ENCODE measurements at regions of chr2 and their contacts with region 1.

Region 1: GRCh38 chr2:197310271-197310985 is at the start of gene ANKRD44:
- DNase-seq: peak; percentile 78 to 94 (median 87)
- ATAC-seq: peak; percentile 73 to 85 (median 77)
- H3K4me3 ChIP-seq: peak within 1 kb of the TSS; percentile 84 to 99
- H3K4me3 Mint-ChIP-seq: peak within 1 kb of the TSS; percentile 92 to 95 (median 92)
- H3K27ac ChIP-seq: peak within 1 kb of the TSS; percentile 83
- H3K27ac Mint-ChIP-seq: peak within 1 kb of the TSS; percentile 99
- H3K4me1 ChIP-seq: peaks cover 34 to 39% of the 10 kb centered on the region in 2 experiments
- H3K4me1 Mint-ChIP-seq: peaks cover 65 to 83% (median 74%) of the 10 kb centered on the region in 3 donors
- H3K27me3 ChIP-seq: no peaks in the 10 kb centered on the region
- H3K27me3 Mint-ChIP-seq: no peaks in the 10 kb centered on the region
- total RNA-seq, gene ANKRD44: 225 to 333 (median 238) TPM

Region 2: DNA sequence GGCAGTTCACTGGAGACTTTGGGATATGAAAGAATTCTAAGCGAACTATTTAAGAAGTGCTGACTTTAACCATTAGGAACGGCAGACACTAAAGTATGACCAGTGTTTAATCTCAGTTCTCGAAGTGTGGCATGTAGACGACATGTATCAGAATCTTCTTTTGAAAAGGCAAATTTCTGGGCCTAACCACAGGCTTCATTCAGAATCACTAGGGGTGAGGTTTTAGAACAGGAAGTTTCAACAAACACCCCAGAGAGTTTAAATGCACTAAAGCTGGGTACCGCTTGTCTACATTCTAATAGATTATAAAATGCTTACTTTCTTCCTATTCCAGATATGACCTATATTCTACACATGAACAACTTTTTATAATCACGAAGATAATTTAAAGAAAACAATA is 180.1 kb before region 1 on chr2:
- CTCF ChIA-PET with region 1: no interaction called
- POLR2A ChIA-PET with region 1: no interaction called
- DNase-seq: peak in 9 of 35 experiments; percentile 13 to 59 (median 21)
- ATAC-seq: peak; percentile 88 to 95 (median 92)
- H3K4me3 ChIP-seq: no peak overlapping the region
- H3K4me3 Mint-ChIP-seq: peak overlapping the region; percentile 0 to 53 (median 2)
- H3K27ac ChIP-seq: peak overlapping the region; percentile 56
- H3K27ac Mint-ChIP-seq: peak overlapping the region; percentile 72 to 81
- H3K4me1 ChIP-seq: peaks cover 21 to 48% of the 10 kb centered on the region in 2 experiments
- H3K4me1 Mint-ChIP-seq: peaks cover 81 to 84% (median 83%) of the 10 kb centered on the region in 3 donors
- H3K27me3 ChIP-seq: no peaks in the 10 kb centered on the region
- H3K27me3 Mint-ChIP-seq: no peaks in the 10 kb centered on the region

Region 3: DNA sequence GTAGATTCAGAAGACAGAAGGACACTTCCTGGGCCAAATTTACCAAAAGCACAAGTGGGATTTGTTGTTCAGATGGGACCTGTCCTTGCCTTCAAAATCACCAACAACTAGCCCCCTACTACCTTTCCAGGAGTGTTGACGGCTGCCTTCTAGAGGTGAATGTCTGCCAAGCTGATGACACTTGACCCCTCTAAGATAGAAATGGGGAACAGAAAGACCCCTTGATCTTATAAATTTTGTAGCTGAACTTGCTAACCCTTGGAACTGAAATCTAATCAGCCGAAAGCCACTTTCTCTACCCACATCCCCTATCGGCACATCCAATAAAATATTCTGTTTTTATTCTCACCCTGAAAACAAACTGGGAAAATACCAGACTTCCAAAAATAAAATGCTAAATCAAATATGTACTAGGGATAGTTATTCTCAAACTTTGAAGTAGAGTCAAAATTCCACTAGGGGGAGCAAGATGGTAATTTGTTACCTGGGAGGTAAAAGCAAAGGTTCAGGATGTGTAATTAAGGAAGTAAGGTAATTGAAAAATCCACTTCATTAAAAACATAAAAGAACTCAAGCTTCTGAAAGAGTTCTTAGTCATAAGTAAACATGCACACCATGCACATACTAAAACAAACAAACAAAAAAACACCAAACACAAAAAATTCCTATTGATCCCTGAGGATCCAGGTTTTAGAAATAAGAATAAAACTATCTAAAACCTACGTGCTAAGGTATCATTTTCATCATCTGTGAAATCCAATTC is 119.1 kb before region 1 on chr2:
- CTCF ChIA-PET with region 1: interaction called, 13 to 50 read pairs
- POLR2A ChIA-PET with region 1: interaction called, 4 to 5 read pairs
- DNase-seq: peak in 1 of 35 experiments; percentile 84
- ATAC-seq: peak; percentile 51 to 63 (median 56)
- H3K4me3 ChIP-seq: no peak overlapping the region
- H3K4me3 Mint-ChIP-seq: peak overlapping the region in 2 of 3 donors; percentile 7 to 51
- H3K27ac ChIP-seq: peak overlapping the region; percentile 79
- H3K27ac Mint-ChIP-seq: peak overlapping the region; percentile 78 to 86
- H3K4me1 ChIP-seq: peaks cover 35 to 61% of the 10 kb centered on the region in 2 experiments
- H3K4me1 Mint-ChIP-seq: peaks cover 83 to 88% (median 87%) of the 10 kb centered on the region in 3 donors
- H3K27me3 ChIP-seq: no peaks in the 10 kb centered on the region
- H3K27me3 Mint-ChIP-seq: no peaks in the 10 kb centered on the region

Region 4: GRCh38 chr2:197209742-197210408 is 100.6 kb before region 1 on chr2:
- CTCF ChIA-PET with region 1: interaction called, 4 to 14 read pairs
- POLR2A ChIA-PET with region 1: interaction called, 5 read pairs
- DNase-seq: peak in 8 of 35 experiments; percentile 9 to 64 (median 27)
- ATAC-seq: peak; percentile 8 to 35 (median 28)
- H3K4me3 ChIP-seq: no peak overlapping the region
- H3K4me3 Mint-ChIP-seq: peak overlapping the region; percentile 52 to 79 (median 63)
- H3K27ac ChIP-seq: peak overlapping the region; percentile 95
- H3K27ac Mint-ChIP-seq: peak overlapping the region; percentile 98 to 99
- H3K4me1 ChIP-seq: peaks cover 84 to 94% of the 10 kb centered on the region in 2 experiments
- H3K4me1 Mint-ChIP-seq: peaks cover 97 to 99% (median 99%) of the 10 kb centered on the region in 3 donors
- H3K27me3 ChIP-seq: no peaks in the 10 kb centered on the region
- H3K27me3 Mint-ChIP-seq: no peaks in the 10 kb centered on the region

Region 5: GRCh38 chr2:197255543-197255942 is 54.9 kb before region 1 on chr2:
- CTCF ChIA-PET with region 1: interaction called, 7 to 29 read pairs
- POLR2A ChIA-PET with region 1: interaction called, 6 to 7 read pairs
- DNase-seq: peak; percentile 35 to 87 (median 72)
- ATAC-seq: peak; percentile 72 to 92 (median 82)
- H3K4me3 ChIP-seq: peak overlapping the region; percentile 24 to 29
- H3K4me3 Mint-ChIP-seq: peak overlapping the region; percentile 77 to 83 (median 77)
- H3K27ac ChIP-seq: peak overlapping the region; percentile 95
- H3K27ac Mint-ChIP-seq: peak overlapping the region; percentile 97 to 98
- H3K4me1 ChIP-seq: peaks cover 50 to 66% of the 10 kb centered on the region in 2 experiments
- H3K4me1 Mint-ChIP-seq: peaks cover 78 to 86% (median 83%) of the 10 kb centered on the region in 3 donors
- H3K27me3 ChIP-seq: no peaks in the 10 kb centered on the region
- H3K27me3 Mint-ChIP-seq: no peaks in the 10 kb centered on the region

Region 6: DNA sequence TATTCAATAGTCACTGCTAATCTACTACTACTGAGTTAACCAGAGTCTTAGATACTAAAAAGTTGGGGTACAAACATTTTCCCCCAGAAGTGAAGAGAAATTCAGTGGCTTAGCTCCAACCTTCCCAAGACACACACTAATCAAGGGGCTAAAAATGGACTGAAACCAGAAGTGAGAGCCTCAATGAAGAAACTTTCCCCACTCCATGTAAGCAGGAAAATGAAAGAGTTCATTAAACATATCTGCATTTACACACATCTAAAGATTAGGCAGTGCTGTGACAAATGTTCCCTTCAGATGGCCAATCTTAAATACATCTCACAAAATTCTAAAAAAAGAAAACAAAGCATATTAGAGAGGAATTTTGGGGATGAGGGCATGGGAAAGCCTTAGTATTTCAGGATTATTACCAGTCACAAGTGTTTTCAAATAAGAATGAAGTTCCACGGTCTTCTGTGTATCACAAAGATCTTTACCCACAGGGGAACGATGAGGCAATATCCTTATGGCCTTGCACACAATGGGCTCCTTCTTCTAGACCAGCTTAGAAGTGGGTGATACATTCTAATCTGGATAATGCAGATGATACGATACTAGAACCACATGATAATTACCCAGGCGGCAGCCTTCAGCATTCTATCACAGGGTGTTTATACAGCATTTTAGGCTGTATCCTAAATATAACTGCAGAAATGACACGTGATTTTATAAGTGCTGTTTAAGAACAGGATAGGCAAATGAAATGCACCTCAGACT is 17.0 kb before region 1 on chr2:
- CTCF ChIA-PET with region 1: interaction called in 1 of 2 experiments, 12 read pairs
- POLR2A ChIA-PET with region 1: interaction called, 4 to 19 read pairs
- DNase-seq: peak in 10 of 35 experiments; percentile 12 to 63 (median 22)
- ATAC-seq: peak; percentile 63 to 74 (median 64)
- H3K4me3 ChIP-seq: peak overlapping the region; percentile 30 to 31
- H3K4me3 Mint-ChIP-seq: peak overlapping the region; percentile 65 to 92 (median 78)
- H3K27ac ChIP-seq: peak overlapping the region; percentile 79
- H3K27ac Mint-ChIP-seq: peak overlapping the region; percentile 96 to 99
- H3K4me1 ChIP-seq: peaks cover 57 to 60% of the 10 kb centered on the region in 2 experiments
- H3K4me1 Mint-ChIP-seq: peaks cover 92 to 95% (median 94%) of the 10 kb centered on the region in 3 donors
- H3K27me3 ChIP-seq: no peaks in the 10 kb centered on the region
- H3K27me3 Mint-ChIP-seq: no peaks in the 10 kb centered on the region

Region 7: DNA sequence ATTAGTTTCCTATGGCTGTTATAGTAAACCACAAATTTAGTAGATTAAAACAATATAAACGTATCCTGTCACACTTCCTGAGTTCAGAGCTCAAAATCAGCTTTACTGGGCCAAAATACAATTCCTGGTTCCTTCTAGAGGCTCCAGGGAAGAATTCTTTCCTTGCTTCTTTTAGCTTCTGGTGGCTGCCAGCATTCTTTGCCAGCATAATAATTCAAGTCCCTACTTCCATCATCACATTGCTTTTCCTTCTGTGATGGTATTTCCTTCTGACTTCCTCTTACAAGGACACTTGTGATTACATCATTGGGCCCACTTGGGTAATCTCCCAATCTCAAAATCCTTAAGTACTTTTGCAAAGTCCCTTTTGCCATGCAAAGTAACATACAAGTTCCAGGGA is 246.0 kb after region 1 on chr2:
- CTCF ChIA-PET with region 1: no interaction called
- POLR2A ChIA-PET with region 1: no interaction called
- DNase-seq: no peak
- ATAC-seq: no peak
- H3K4me3 ChIP-seq: no peak overlapping the region
- H3K4me3 Mint-ChIP-seq: no peak overlapping the region
- H3K27ac ChIP-seq: no peak overlapping the region
- H3K27ac Mint-ChIP-seq: peak overlapping the region; percentile 21 to 68
- H3K4me1 ChIP-seq: no peaks in the 10 kb centered on the region
- H3K4me1 Mint-ChIP-seq: peaks cover 0 to 6% (median 3%) of the 10 kb centered on the region in 3 donors
- H3K27me3 ChIP-seq: no peaks in the 10 kb centered on the region
- H3K27me3 Mint-ChIP-seq: no peaks in the 10 kb centered on the region

Region 8: DNA sequence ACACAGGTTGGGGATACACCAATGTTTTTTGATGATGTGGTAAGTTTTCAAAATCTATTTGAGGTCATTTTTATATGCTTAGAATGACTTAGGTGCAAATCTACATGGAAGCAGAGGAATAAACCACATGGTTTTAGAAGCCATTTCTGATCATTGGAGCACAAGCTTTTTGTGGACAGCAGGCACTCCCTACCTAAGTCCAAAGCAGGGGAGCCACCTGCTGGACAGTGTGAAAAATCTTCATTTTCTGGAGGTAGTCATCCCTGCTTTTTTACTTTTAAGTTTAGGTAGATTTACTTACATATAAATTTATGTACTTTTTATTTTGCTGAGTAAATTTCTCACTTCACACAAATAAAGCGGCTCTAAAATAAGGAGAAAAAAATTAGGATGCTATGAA is 817.2 kb after region 1 on chr2:
- CTCF ChIA-PET with region 1: no interaction called
- POLR2A ChIA-PET with region 1: no interaction called
- DNase-seq: peak in 34 of 35 experiments; percentile 2 to 72 (median 26)
- ATAC-seq: peak; percentile 48 to 59 (median 54)
- H3K4me3 ChIP-seq: no peak overlapping the region
- H3K4me3 Mint-ChIP-seq: no peak overlapping the region
- H3K27ac ChIP-seq: no peak overlapping the region
- H3K27ac Mint-ChIP-seq: no peak overlapping the region
- H3K4me1 ChIP-seq: peaks cover 0 to 4% of the 10 kb centered on the region in 2 experiments
- H3K4me1 Mint-ChIP-seq: peaks cover 0 to 7% (median 0%) of the 10 kb centered on the region in 3 donors
- H3K27me3 ChIP-seq: no peaks in the 10 kb centered on the region
- H3K27me3 Mint-ChIP-seq: no peaks in the 10 kb centered on the region

Measured in T-cell (primary cell).